ENCODE measurements at regions of chr22 and their contacts with region 1.

Region 1: DNA sequence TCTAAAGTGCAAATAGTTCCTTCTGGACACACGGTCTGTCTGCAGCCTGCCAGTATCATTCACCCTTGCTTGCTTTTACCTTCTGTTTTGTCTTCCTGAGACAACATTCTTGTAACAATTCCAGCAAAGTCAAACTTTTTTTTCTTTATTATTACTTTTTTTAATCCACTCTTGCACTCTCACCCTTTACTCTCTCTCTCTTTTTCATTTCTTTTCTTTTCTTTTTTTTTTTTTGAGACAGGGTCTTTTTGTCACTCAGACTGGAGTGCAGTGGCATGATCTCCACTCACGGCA is 53.7 kb downstream of the MCHR1 start:
- DNase-seq: no peak
- ATAC-seq: no peak
- H3K4me3 Mint-ChIP-seq: no peak overlapping the region
- H3K27ac Mint-ChIP-seq: peak overlapping the region; percentile 91
- H3K4me1 Mint-ChIP-seq: peaks cover 31% of the 10 kb centered on the region
- H3K27me3 Mint-ChIP-seq: no peaks in the 10 kb centered on the region
- CTCF ChIP-seq: no peak

Region 2: GRCh38 chr22:40757071-40757470 is 24.1 kb after region 1 on chr22:
- CTCF ChIA-PET with region 1: interaction called, 11 read pairs
- POLR2A ChIA-PET with region 1: no interaction called
- DNase-seq: no peak
- ATAC-seq: no peak
- H3K4me3 Mint-ChIP-seq: no peak overlapping the region
- H3K27ac Mint-ChIP-seq: no peak overlapping the region
- H3K4me1 Mint-ChIP-seq: peaks cover 44% of the 10 kb centered on the region
- H3K27me3 Mint-ChIP-seq: no peaks in the 10 kb centered on the region; the same call in 1 of the 2 replicates
- CTCF ChIP-seq: no peak